K562 (cell line): ENCODE measurements at regions of chr2 and their contacts with region 1.

Region 1: DNA sequence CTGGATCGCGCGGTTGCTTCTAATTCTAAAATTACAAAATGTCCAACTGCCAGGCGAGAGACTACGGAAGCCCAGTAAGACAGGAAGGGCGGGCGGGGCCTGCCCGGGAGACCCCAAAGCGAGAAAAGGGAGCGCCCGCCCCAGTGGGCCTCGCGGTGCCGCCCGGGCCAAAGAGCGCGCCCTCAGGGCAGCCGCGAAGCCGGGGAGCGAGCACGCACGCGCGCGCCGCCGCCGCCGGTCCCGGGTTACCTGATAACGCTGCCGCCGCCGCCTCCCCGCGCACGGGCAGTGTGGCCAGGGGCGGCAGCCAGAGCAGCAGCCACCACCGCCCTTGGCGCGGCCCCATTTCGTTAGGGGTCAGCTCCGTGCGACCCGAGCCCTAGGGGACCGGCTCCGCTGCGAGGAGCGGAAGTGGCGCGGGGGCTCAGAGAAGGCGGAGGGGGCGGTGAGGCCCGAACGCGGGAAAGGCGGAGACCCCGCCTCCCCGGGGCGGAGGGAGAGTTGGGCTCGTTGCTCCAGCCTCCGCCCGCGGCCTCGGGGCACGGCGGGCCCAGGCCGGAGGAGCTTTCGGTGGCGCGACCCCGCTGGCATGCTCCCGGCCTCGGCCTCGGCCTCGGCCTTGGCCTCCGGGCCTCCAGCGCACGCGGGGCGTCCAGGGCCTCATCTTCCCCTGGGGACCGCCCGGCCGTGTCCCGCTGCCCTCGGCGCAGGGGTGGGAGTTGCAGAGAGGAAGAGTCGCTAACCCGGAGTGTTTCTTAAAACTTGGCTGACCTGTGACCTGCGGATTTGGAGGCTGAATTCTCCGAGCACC is at the start of gene NEMP2:
- DNase-seq: peak; percentile 82 to 87 (median 82)
- ATAC-seq: peak; percentile 90
- H3K4me3 ChIP-seq: peak within 1 kb of the TSS; percentile 67
- H3K27ac ChIP-seq: peak within 1 kb of the TSS; percentile 95
- H3K4me1 ChIP-seq: peaks cover 10 to 35% of the 10 kb centered on the region in 2 experiments; a peak in 4 of 5 replicates
- H3K27me3 ChIP-seq: no peaks in the 10 kb centered on the region
- CTCF ChIP-seq: no peak
- EP300 ChIP-seq: 0 out of 2 replicates have a peak, but pooled peaks have one; percentile 22
- POLR2A ChIP-seq: peak; percentile 78
- RAD21 ChIP-seq: no peak
- polyA plus RNA-seq, gene NEMP2: 0.32 to 0.36 TPM

Region 2: GRCh38 chr2:190443778-190444481 is 90.6 kb before region 1 on chr2:
- CTCF ChIA-PET with region 1: no interaction called
- POLR2A ChIA-PET with region 1: no interaction called
- in situ Hi-C with region 1: no loop called
- intact Hi-C with region 1: no loop called
- DNase-seq: no peak
- ATAC-seq: peak; percentile 52; the same call in 2 of the 3 replicates
- H3K4me3 ChIP-seq: no peak overlapping the region
- H3K27ac ChIP-seq: no peak overlapping the region
- H3K4me1 ChIP-seq: peaks cover 0 to 2% of the 10 kb centered on the region in 2 experiments; a peak in 2 of 5 replicates
- H3K27me3 ChIP-seq: no peaks in the 10 kb centered on the region
- CTCF ChIP-seq: no peak
- EP300 ChIP-seq: no peak
- POLR2A ChIP-seq: no peak
- RAD21 ChIP-seq: no peak

Region 3: GRCh38 chr2:190571686-190572085 is 37.2 kb after region 1 on chr2:
- CTCF ChIA-PET with region 1: no interaction called
- POLR2A ChIA-PET with region 1: no interaction called
- in situ Hi-C with region 1: no loop called
- intact Hi-C with region 1: loop called (anchors 5 kb)
- DNase-seq: no peak
- ATAC-seq: peak; percentile 72
- H3K4me3 ChIP-seq: no peak overlapping the region
- H3K27ac ChIP-seq: no peak overlapping the region
- H3K4me1 ChIP-seq: peaks cover 0 to 7% of the 10 kb centered on the region in 2 experiments; a peak in 2 of 5 replicates
- H3K27me3 ChIP-seq: no peaks in the 10 kb centered on the region
- CTCF ChIP-seq: no peak
- EP300 ChIP-seq: no peak
- POLR2A ChIP-seq: no peak
- RAD21 ChIP-seq: no peak

Region 4: GRCh38 chr2:190583507-190584337 is 49.2 kb after region 1 on chr2:
- CTCF ChIA-PET with region 1: no interaction called
- POLR2A ChIA-PET with region 1: no interaction called
- in situ Hi-C with region 1: no loop called
- intact Hi-C with region 1: loop called (anchors 5 kb)
- DNase-seq: no peak
- ATAC-seq: no peak
- H3K4me3 ChIP-seq: no peak overlapping the region
- H3K27ac ChIP-seq: no peak overlapping the region
- H3K4me1 ChIP-seq: peaks cover 4 to 56% of the 10 kb centered on the region in 2 experiments; a peak in 4 of 5 replicates
- H3K27me3 ChIP-seq: no peaks in the 10 kb centered on the region
- CTCF ChIP-seq: no peak
- EP300 ChIP-seq: no peak
- POLR2A ChIP-seq: no peak
- RAD21 ChIP-seq: no peak

Region 5: DNA sequence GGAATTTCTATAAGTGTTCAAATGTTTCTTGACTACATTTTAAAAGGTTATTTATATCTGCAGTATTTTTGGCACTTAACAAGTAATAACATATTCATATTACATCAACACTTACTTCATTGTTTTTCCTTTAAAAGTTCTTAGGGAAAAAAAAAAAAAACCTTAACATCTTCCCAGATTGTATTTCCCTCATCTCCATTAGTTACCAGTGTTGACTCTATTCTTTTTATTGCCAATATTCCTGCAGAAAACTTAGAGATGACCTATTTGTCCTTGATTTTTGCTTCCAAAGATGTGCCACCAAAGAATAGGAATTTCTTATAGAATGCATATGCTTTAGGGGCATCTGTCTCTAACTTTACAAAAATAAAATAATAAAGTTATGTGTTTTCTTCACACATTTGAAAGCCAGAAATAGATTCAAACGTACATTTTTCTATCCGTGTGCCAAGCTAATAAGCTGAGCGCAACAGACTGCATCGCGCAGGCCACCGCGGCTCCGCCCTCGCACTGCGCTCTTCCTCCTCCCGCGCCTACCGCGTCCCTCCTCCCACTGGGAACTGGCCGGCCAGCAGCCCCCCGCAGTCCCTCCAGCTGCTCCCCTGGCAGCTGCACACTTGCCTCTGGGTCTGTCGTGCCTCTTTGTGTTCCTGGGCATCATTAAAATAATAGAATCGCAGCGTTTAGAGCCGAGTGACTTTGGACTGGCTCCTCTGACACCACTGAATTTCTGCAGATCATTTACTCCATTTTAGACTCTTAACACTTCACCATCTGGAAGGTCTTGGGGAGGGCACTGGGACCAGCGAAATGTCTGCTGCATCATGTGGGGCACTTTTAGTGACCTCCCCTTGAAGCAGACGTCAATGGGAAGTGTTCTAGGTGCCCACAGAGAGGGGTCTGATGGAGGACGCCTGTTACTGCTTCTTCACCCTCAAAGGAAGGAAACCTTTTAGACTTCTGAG is 93.2 kb after region 1 on chr2:
- CTCF ChIA-PET with region 1: no interaction called
- POLR2A ChIA-PET with region 1: no interaction called
- in situ Hi-C with region 1: no loop called
- intact Hi-C with region 1: no loop called
- DNase-seq: no peak
- ATAC-seq: no peak; the same call in 2 of the 3 replicates
- H3K4me3 ChIP-seq: no peak overlapping the region
- H3K27ac ChIP-seq: no peak overlapping the region
- H3K4me1 ChIP-seq: no peaks in the 10 kb centered on the region; a peak in 1 of 5 replicates
- H3K27me3 ChIP-seq: no peaks in the 10 kb centered on the region
- CTCF ChIP-seq: no peak
- EP300 ChIP-seq: no peak
- POLR2A ChIP-seq: no peak
- RAD21 ChIP-seq: no peak

Region 6: GRCh38 chr2:190648289-190649034 is 113.9 kb after region 1 on chr2:
- CTCF ChIA-PET with region 1: no interaction called
- POLR2A ChIA-PET with region 1: interaction called, 3 read pairs
- in situ Hi-C with region 1: no loop called
- intact Hi-C with region 1: loop called (anchors 2 kb)
- DNase-seq: peak; percentile 85 to 86 (median 86)
- ATAC-seq: peak; percentile 84
- H3K4me3 ChIP-seq: peak overlapping the region; percentile 56
- H3K27ac ChIP-seq: peak overlapping the region; percentile 74
- H3K4me1 ChIP-seq: peaks cover 14 to 15% of the 10 kb centered on the region in 2 experiments; a peak in 4 of 5 replicates
- H3K27me3 ChIP-seq: no peaks in the 10 kb centered on the region
- CTCF ChIP-seq: no peak
- EP300 ChIP-seq: no peak
- POLR2A ChIP-seq: peak; percentile 43
- RAD21 ChIP-seq: no peak

Region 7: GRCh38 chr2:190679813-190680591 is 145.5 kb after region 1 on chr2:
- CTCF ChIA-PET with region 1: no interaction called
- POLR2A ChIA-PET with region 1: no interaction called
- in situ Hi-C with region 1: no loop called
- intact Hi-C with region 1: loop called (anchors 2 kb)
- DNase-seq: peak; percentile 27 to 70 (median 40)
- ATAC-seq: peak; percentile 97
- H3K4me3 ChIP-seq: no peak overlapping the region
- H3K27ac ChIP-seq: no peak overlapping the region
- H3K4me1 ChIP-seq: peaks cover 0 to 10% of the 10 kb centered on the region in 2 experiments; a peak in 2 of 5 replicates
- H3K27me3 ChIP-seq: no peaks in the 10 kb centered on the region
- CTCF ChIP-seq: peak; percentile 62 to 71 (median 65)
- EP300 ChIP-seq: no peak
- POLR2A ChIP-seq: no peak
- RAD21 ChIP-seq: peak; percentile 45 to 70

Region 8: DNA sequence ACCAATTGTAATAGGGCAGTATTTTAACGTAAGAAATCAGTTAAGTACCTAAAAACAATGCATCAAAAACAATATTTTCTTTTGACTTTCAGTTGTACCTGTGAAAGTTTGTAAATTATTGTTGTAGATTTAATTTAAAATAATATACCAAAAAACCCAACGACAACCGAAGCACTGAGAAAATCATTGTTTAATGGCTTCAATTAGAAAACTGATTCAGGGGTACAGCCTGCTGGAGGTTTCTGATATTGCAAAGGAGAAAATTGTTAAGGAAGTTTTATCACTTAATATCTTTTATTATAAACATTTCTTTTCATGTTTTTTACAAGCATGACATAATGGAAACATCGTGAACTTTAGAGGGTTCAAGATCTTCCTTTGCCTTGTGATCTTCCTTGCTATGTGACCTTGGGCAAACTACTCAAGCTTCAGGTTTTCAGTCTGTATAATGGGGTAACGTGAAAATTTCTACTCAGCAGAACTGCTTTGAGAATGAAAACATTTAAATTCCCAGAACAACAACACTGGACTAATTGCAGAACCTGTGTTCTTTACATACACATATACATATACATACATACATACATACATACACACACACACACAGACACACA is 269.8 kb after region 1 on chr2:
- CTCF ChIA-PET with region 1: no interaction called
- POLR2A ChIA-PET with region 1: no interaction called
- in situ Hi-C with region 1: no loop called
- intact Hi-C with region 1: loop called (anchors 10 kb)
- DNase-seq: peak in 1 of 4 experiments; percentile 13
- ATAC-seq: no peak
- H3K4me3 ChIP-seq: no peak overlapping the region
- H3K27ac ChIP-seq: no peak overlapping the region
- H3K4me1 ChIP-seq: no peaks in the 10 kb centered on the region; a peak in 1 of 5 replicates
- H3K27me3 ChIP-seq: no peaks in the 10 kb centered on the region
- CTCF ChIP-seq: peak; percentile 22 to 63 (median 43); a peak in 4 of 6 replicates
- EP300 ChIP-seq: no peak
- POLR2A ChIP-seq: no peak
- RAD21 ChIP-seq: peak; percentile 56 to 63

Region 9: GRCh38 chr2:190819840-190820301 is 285.4 kb after region 1 on chr2:
- CTCF ChIA-PET with region 1: no interaction called
- POLR2A ChIA-PET with region 1: no interaction called
- in situ Hi-C with region 1: no loop called
- intact Hi-C with region 1: no loop called
- DNase-seq: no peak
- ATAC-seq: no peak
- H3K4me3 ChIP-seq: no peak overlapping the region
- H3K27ac ChIP-seq: no peak overlapping the region
- H3K4me1 ChIP-seq: no peaks in the 10 kb centered on the region
- H3K27me3 ChIP-seq: no peaks in the 10 kb centered on the region; a peak in 1 of 5 replicates
- CTCF ChIP-seq: no peak
- EP300 ChIP-seq: no peak
- POLR2A ChIP-seq: no peak
- RAD21 ChIP-seq: no peak